ENCODE measurements at regions of chr16 and their contacts with region 1.

Region 1: GRCh38 chr16:28863929-28864793 is 518 bp downstream of the SH2B1 start:
- DNase-seq: peak in 5 of 10 donors; percentile 17 to 29 (median 21)
- ATAC-seq: no peak
- H3K4me3 Mint-ChIP-seq: peak overlapping the region; percentile 98 to 100 (median 98)
- H3K27ac Mint-ChIP-seq: peak overlapping the region; percentile 96 to 100 (median 99)
- H3K4me1 Mint-ChIP-seq: peaks cover 17 to 39% (median 34%) of the 10 kb centered on the region in 4 donors
- H3K27me3 Mint-ChIP-seq: no peaks in the 10 kb centered on the region

Region 2: GRCh38 chr16:28879841-28880588 is 15.9 kb after region 1 on chr16:
- POLR2A ChIA-PET with region 1: interaction called, 22 read pairs
- DNase-seq: peak; percentile 71 to 94 (median 83)
- ATAC-seq: peak; percentile 98
- H3K4me3 Mint-ChIP-seq: peak overlapping the region; percentile 67 to 92 (median 87)
- H3K27ac Mint-ChIP-seq: peak overlapping the region in 4 of 10 donors; percentile 53 to 86 (median 65)
- H3K4me1 Mint-ChIP-seq: peaks cover 7 to 18% (median 15%) of the 10 kb centered on the region in 4 donors
- H3K27me3 Mint-ChIP-seq: peaks cover 4 to 13% (median 11%) of the 10 kb centered on the region in 5 donors